Activated naive CD4-positive, alpha-beta T cell treated with anti-CD3 and anti-CD28 coated beads for 36 hours (primary cell): ENCODE measurements at regions of chr13 and their contacts with region 1.

Region 1: GRCh38 chr13:32310134-32310706 is 4.9 kb downstream of the ZAR1L start:
- DNase-seq: peak; percentile 43
- H3K4me3 Mint-ChIP-seq: no peak overlapping the region
- H3K27ac Mint-ChIP-seq: no peak overlapping the region
- H3K4me1 Mint-ChIP-seq: peaks cover 14% of the 10 kb centered on the region
- H3K27me3 Mint-ChIP-seq: no peaks in the 10 kb centered on the region

Region 2: GRCh38 chr13:31909864-31910551 is 400.2 kb before region 1 on chr13:
- CTCF ChIA-PET with region 1: interaction called, 11 read pairs
- intact Hi-C with region 1: loop called (anchors 1 kb)
- DNase-seq: peak; percentile 63
- H3K4me3 Mint-ChIP-seq: no peak overlapping the region
- H3K27ac Mint-ChIP-seq: no peak overlapping the region
- H3K4me1 Mint-ChIP-seq: no peaks in the 10 kb centered on the region
- H3K27me3 Mint-ChIP-seq: peaks cover 3% of the 10 kb centered on the region

Region 3: DNA sequence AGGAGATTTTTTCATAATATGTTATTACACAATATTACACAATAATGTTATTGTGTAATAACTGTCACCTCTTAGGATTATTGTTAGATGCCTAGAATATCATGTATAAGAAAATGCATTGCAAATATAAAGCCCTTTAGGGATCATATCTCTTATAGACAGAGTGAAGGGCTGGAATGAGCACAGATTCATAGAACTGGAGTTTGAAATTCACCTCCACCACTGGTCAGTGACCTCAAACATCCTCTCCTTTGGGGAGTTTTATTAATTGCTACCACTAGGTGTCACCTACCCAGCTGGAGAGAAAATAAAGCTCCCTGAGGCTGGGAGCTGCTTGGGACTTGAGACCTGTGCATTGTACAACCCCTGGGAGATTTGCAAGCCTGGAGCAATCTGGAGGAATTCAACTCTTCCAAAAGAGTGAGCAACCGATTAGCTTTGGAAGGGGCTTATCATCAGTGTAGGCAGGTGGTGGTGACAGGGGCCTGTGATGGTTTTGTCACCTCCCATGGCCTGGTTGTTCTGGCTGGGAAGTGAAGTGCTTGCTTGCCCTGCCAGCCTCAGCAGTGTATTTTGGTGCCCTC is 308.9 kb before region 1 on chr13:
- CTCF ChIA-PET with region 1: no interaction called
- intact Hi-C with region 1: loop called (anchors 1 kb)
- DNase-seq: peak; percentile 14
- H3K4me3 Mint-ChIP-seq: no peak overlapping the region
- H3K27ac Mint-ChIP-seq: no peak overlapping the region
- H3K4me1 Mint-ChIP-seq: no peaks in the 10 kb centered on the region
- H3K27me3 Mint-ChIP-seq: no peaks in the 10 kb centered on the region

Region 4: DNA sequence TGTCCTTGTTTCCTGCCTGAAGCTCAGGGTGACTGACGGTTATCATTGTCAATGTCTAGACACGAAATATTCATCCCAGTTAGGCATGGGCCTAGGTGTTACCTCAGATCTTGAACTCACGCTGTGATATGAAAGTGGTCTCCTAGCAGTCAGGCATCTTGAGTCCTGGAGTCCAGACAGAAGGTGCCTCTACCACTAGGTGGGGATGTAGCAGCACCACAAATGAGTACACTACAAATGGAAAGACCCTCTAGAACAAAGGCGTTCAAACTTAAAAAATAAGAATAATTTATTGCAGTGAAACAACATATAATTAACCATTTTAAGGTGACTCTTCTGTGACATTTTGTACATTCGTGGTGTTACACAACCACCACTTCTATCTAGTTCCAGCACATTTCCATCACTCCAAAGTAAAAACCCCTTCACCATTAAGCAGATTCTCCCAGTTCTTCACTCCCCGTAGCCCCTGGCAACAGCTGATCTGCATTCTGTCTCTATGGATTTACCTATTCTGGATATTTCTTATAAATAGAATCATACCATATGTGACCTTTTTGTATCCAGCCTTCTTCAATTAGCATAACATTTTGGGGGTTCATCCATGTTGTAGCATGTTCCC is 290.5 kb before region 1 on chr13:
- CTCF ChIA-PET with region 1: no interaction called
- intact Hi-C with region 1: loop called (anchors 1 kb)
- DNase-seq: peak; percentile 62
- H3K4me3 Mint-ChIP-seq: no peak overlapping the region
- H3K27ac Mint-ChIP-seq: no peak overlapping the region
- H3K4me1 Mint-ChIP-seq: no peaks in the 10 kb centered on the region
- H3K27me3 Mint-ChIP-seq: no peaks in the 10 kb centered on the region

Region 5: DNA sequence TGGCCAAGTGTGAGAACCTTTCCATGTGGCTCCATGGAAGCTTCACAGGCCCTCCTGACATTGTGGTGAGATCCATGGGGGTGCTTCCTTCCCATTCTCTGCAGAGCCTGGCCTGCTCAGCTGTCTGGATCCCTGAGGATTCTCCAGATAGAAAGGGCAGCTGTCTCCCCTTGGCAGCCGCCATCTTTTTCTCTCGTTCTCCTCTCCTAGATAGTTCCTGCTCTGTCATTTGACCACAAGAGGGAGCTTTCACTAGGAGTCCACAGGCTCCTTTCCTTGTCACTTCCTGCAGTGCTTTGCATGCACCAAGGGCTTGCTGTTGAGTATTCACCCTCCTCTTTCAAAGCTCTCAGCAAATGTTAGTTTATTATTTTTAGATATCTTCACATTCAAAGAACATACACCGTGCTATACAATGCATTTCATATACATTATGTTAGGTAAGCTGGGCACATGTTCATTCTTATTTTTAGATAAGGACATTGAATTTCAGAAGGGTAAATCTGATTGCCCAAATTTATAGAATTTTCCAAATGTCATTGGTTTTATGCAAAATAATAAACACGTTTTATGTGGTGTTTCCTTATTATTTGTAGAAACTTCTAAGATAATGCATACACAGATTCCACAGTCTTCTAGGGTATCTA is 145.5 kb before region 1 on chr13:
- CTCF ChIA-PET with region 1: interaction called, 4 read pairs
- intact Hi-C with region 1: loop called (anchors 2 kb)
- DNase-seq: peak; percentile 32
- H3K4me3 Mint-ChIP-seq: no peak overlapping the region
- H3K27ac Mint-ChIP-seq: no peak overlapping the region
- H3K4me1 Mint-ChIP-seq: no peaks in the 10 kb centered on the region
- H3K27me3 Mint-ChIP-seq: no peaks in the 10 kb centered on the region

Region 6: DNA sequence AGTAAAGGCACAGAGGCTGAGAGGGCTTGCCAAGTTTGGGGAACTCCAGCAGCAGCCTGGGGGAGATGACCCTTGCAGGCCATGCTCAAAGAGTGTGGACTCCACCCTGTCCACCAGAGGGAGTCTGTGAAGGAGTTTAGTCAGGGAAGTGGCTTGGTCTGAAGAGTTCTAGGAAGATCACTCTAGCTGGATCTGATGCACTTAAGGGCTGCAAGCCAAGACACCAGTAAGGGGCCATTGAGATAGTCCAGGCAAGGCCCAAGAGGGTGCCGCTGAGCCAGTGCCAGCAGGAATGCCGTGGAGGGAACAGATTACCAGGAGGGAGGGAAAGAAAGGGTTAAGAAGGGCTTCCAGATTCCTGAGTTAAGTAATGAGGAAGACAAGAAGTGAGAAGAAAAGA is 63.8 kb before region 1 on chr13:
- CTCF ChIA-PET with region 1: interaction called, 6 read pairs
- intact Hi-C with region 1: loop called (anchors 1 kb)
- DNase-seq: peak; percentile 63
- H3K4me3 Mint-ChIP-seq: no peak overlapping the region
- H3K27ac Mint-ChIP-seq: peak overlapping the region; percentile 22
- H3K4me1 Mint-ChIP-seq: no peaks in the 10 kb centered on the region
- H3K27me3 Mint-ChIP-seq: no peaks in the 10 kb centered on the region

Region 7: GRCh38 chr13:32267836-32268439 is 42.3 kb before region 1 on chr13:
- CTCF ChIA-PET with region 1: interaction called, 8 read pairs
- intact Hi-C with region 1: loop called (anchors 1 kb)
- DNase-seq: peak; percentile 67
- H3K4me3 Mint-ChIP-seq: no peak overlapping the region
- H3K27ac Mint-ChIP-seq: no peak overlapping the region
- H3K4me1 Mint-ChIP-seq: peaks cover 5% of the 10 kb centered on the region
- H3K27me3 Mint-ChIP-seq: no peaks in the 10 kb centered on the region